ENCODE measurements at regions of chr14 and their contacts with region 1.

Region 1: DNA sequence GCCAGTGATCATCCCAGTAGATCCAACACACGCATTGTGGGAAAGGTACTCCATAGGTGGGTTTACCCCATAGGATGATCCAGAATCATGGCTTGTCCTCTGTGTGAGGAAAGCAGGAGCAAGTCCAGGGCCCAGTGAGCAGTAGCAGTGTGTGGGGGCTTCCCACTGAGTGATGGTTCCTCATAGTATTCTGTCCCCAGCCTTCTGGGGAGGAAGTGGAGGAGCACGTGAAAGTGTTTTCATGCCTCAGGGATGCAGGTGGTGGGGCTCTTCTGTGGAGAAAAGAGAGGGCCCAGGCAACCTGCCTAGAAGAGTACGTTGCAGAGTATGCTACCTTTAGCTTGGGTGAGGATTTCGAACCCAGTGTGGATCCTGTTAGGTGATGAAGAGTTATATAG is 56.5 kb downstream of the SUSD6 start:
- DNase-seq: no peak
- CTCF ChIP-seq: no peak

Region 2: GRCh38 chr14:69683971-69684370 is 16.0 kb after region 1 on chr14:
- CTCF ChIA-PET with region 1: interaction called, 5 read pairs
- POLR2A ChIA-PET with region 1: interaction called, 12 read pairs
- DNase-seq: no peak
- CTCF ChIP-seq: no peak

Region 3: GRCh38 chr14:69749956-69750355 is 82.0 kb after region 1 on chr14:
- CTCF ChIA-PET with region 1: no interaction called
- POLR2A ChIA-PET with region 1: no interaction called
- DNase-seq: no peak
- CTCF ChIP-seq: no peak